Natural killer cell (primary cell): ENCODE measurements at regions of chr13 and their contacts with region 1.

Region 1: DNA sequence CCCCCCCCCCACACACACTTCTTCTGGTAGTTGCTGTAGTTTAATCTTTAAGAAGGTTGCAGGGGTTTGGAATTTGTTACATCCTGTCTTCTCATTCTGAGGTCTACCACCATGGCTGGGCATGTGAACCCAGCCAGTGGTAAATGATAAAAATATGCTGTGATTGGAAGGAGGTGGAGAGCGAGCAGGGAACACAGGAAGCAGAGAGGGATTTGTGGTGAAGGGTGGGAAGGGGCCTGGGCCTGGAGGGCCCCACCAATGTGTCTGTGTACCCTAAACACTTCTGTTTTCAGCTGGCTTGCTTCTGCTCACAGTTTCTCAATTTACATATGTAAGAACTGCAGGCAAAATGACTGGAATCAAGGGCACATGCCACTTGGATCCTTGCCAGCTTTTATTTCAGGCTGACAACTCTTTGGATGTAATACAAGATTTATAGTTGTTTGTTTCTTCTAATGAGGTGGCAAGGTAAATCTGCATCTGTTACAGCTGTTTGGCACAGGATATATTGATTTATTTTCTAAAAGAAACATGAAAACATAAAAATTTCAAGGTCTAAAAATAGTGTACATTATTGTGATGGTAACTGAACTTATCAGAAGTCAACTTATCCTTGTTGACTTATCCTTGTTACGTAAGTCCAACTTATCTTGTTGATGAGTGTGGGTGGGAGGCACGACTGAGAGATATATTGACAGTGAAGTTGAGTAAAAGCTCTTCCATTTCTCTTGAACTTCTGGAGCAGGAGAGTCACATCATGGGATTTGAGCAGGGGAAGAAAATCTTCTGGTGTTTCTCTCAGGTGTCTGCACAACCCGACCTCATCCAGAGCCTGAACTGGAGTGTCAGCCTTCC is 313.2 kb downstream of the SHISA2 start:
- DNase-seq: peak; percentile 38 to 39
- ATAC-seq: peak; percentile 67 to 68 (median 68)
- H3K4me3 ChIP-seq: no peak overlapping the region
- H3K4me3 Mint-ChIP-seq: peak overlapping the region; percentile 65
- H3K27ac ChIP-seq: peak overlapping the region; percentile 72
- H3K27ac Mint-ChIP-seq: peak overlapping the region; percentile 83
- H3K4me1 ChIP-seq: peaks cover 18% of the 10 kb centered on the region
- H3K4me1 Mint-ChIP-seq: peaks cover 27 to 38% of the 10 kb centered on the region in 2 donors
- H3K27me3 ChIP-seq: no peaks in the 10 kb centered on the region
- H3K27me3 Mint-ChIP-seq: no peaks in the 10 kb centered on the region
- CTCF ChIP-seq: no peak

Region 2: DNA sequence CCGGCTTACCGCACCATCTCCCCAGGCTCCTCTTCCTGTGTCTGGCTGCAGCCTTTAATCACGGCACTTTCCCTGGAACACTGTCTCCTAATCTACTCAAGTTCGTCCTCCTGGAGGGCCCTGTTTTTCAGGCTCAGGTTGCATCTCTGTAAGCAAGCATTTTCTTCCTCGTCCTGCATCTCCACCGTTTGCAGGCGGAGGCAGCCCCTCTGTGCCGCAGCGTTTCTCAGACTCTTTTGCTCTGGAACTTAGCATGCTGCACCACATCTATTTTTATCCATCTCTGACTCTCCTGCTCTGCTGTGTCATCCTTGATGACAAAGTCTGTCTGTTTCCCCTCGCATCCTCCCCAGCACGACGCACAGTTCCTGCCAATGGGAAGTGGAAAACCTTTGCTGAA is 249.3 kb before region 1 on chr13:
- intact Hi-C with region 1: no loop called
- DNase-seq: no peak
- ATAC-seq: no peak
- H3K4me3 ChIP-seq: no peak overlapping the region
- H3K4me3 Mint-ChIP-seq: no peak overlapping the region
- H3K27ac ChIP-seq: no peak overlapping the region
- H3K27ac Mint-ChIP-seq: no peak overlapping the region
- H3K4me1 ChIP-seq: no peaks in the 10 kb centered on the region
- H3K4me1 Mint-ChIP-seq: no peaks in the 10 kb centered on the region
- H3K27me3 ChIP-seq: no peaks in the 10 kb centered on the region
- H3K27me3 Mint-ChIP-seq: peaks cover 9 to 12% of the 10 kb centered on the region in 2 donors
- CTCF ChIP-seq: no peak

Region 3: DNA sequence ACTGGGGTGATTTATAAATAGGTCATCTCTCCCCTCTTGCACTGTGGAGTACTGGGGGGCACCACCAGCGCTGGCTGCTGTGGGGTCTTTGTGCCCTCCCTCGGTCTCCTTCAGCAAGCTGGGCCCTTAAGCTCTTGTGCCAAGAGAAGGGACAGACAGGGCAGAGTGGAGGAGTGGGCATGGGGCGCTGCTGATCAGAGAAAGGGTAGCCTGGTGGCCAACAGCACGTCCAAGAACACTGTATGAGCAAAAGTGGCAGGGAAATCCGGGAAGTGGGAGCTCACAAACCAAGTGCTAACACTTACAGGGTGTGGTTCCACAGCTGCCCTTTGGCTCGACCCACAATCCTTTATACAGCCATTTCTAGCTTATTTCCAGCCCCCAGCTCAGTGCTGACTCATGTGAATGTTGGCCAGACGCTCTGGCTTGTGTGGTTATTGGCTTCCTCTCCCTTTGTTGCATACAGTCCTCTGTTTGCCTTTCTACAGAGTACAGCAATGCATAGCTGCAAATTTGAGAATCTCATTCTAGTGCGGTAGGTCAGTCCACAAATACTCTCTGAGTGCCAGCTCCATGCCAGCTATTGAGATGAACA is 14.5 kb after region 1 on chr13:
- intact Hi-C with region 1: loop called (anchors 1 kb)
- DNase-seq: peak; percentile 12 to 35
- ATAC-seq: peak; percentile 85 to 95 (median 94)
- H3K4me3 ChIP-seq: no peak overlapping the region
- H3K4me3 Mint-ChIP-seq: peak overlapping the region; percentile 73
- H3K27ac ChIP-seq: no peak overlapping the region
- H3K27ac Mint-ChIP-seq: peak overlapping the region in 1 of 2 donors; percentile 81
- H3K4me1 ChIP-seq: peaks cover 19% of the 10 kb centered on the region
- H3K4me1 Mint-ChIP-seq: peaks cover 28 to 35% of the 10 kb centered on the region in 2 donors
- H3K27me3 ChIP-seq: no peaks in the 10 kb centered on the region
- H3K27me3 Mint-ChIP-seq: peaks cover 7 to 12% of the 10 kb centered on the region in 2 donors
- CTCF ChIP-seq: no peak